Dorsolateral prefrontal cortex (tissue), 120 donors: ENCODE measurements at regions of chr17 and their contacts with region 1.

Region 1: GRCh38 chr17:78250891-78251794 is 19.7 kb downstream of the TMEM235 start:
- DNase-seq: peak; percentile 75 to 90 (median 86)
- H3K4me3 ChIP-seq: peak overlapping the region in 40 of 59 donors; percentile 6 to 58 (median 29)
- H3K27ac ChIP-seq: peak overlapping the region in 58 of 59 donors; percentile 28 to 100 (median 83)
- H3K27me3 ChIP-seq: no peaks in the 10 kb centered on the region
- CTCF ChIP-seq: peak; percentile 98 to 100 (median 100)

Region 2: GRCh38 chr17:78214706-78215061 is 36.5 kb before region 1 on chr17:
- intact Hi-C with region 1: loop called (anchors 1 to 2 kb)
- DNase-seq: no peak
- H3K4me3 ChIP-seq: peak overlapping the region in 28 of 59 donors; percentile 37 to 72 (median 57)
- H3K27ac ChIP-seq: no peak overlapping the region
- H3K27me3 ChIP-seq: no peaks in the 10 kb centered on the region
- CTCF ChIP-seq: no peak

Region 3: GRCh38 chr17:78289802-78290363 is 38.7 kb after region 1 on chr17:
- intact Hi-C with region 1: no loop called
- DNase-seq: peak; percentile 51 to 83 (median 72)
- H3K4me3 ChIP-seq: no peak overlapping the region
- H3K27ac ChIP-seq: no peak overlapping the region
- H3K27me3 ChIP-seq: no peaks in the 10 kb centered on the region
- CTCF ChIP-seq: peak; percentile 17 to 80 (median 69)

Region 4: DNA sequence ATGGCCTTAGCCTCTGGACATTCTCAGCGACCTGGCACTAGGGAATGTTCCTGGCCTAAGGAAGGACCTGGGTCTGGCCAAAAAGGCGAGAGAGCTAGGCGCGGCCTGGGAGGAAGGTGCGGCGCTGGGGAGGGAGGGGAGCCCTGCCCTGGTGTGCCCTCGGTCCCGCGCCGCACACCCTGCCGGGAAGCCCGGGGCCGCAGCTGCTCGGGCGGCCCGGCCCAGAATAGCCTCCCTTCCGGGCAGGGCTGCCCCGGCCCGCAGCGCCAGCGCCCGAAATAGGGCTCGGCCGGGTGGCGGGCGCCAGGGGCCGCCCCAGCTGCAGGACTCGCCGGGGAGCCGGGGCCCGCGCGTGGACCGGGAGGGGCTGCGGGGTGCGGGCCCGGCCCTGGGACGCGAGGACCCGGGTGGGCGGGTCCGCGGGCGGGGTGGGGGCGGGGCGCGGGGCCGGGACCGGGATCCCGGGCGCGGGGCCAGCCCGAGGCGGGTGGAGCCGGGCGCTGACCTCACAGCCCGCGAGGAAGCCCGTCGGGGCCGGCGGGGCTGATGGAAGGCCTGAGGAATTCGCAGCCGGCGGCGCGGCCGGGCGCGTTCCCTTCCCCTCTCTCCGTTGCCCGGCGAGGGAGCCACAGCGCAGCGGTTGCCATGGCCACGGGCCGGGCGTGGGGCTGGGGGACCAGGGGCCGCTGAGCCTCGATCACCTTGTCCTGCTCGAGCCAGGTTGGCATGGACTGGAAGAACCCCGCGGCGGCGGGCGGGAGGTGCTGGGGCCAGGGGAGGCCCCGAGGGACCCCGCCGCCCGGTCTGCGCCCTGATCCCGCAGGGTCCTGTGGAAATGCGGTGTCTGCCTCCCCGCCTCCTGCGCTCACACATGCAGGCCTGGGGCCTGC is 90.7 kb after region 1 on chr17:
- intact Hi-C with region 1: no loop called
- DNase-seq: peak in 8 of 10 donors; percentile 44 to 85 (median 64)
- H3K4me3 ChIP-seq: peak overlapping the region; percentile 24 to 65 (median 49)
- H3K27ac ChIP-seq: peak overlapping the region in 58 of 59 donors; percentile 48 to 95 (median 86)
- H3K27me3 ChIP-seq: no peaks in the 10 kb centered on the region
- CTCF ChIP-seq: peak in 34 of 56 donors; percentile 9 to 57 (median 36)